Endothelial cell of umbilical vein (primary cell): ENCODE measurements at regions of chr6 and their contacts with region 1.

Region 1: GRCh38 chr6:158972241-158973233 is 27.5 kb downstream of the RSPH3 start:
- DNase-seq: peak; percentile 66
- H3K4me3 ChIP-seq: no peak overlapping the region
- H3K27ac ChIP-seq: no peak overlapping the region
- H3K4me1 ChIP-seq: no peaks in the 10 kb centered on the region
- H3K27me3 ChIP-seq: no peaks in the 10 kb centered on the region
- CTCF ChIP-seq: peak in 1 of 2 donors; percentile 14
- POLR2A ChIP-seq: no peak

Region 2: DNA sequence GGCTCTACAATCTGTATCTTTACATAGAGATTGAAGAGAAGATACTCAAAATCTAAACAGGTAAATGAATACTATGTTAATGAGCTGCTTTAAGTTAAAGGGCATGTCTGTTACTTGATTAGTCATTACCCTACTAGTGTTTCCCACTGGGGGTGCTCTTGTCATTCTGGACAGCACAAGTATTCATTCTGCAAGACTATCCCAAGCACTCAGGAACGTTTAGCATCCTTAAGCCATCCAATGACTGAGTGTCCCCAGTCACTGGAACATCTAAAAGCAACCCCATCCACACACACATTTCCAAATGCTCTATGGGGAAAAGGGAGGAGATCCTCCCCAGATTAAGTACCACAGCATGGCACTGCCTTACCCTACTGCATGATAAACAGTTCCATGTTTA is 179.1 kb before region 1 on chr6:
- CTCF ChIA-PET with region 1: interaction called, 21 read pairs
- POLR2A ChIA-PET with region 1: no interaction called
- dilution Hi-C with region 1: no loop called
- intact Hi-C with region 1: loop called (anchors 1 kb)
- DNase-seq: peak; percentile 37
- H3K4me3 ChIP-seq: no peak overlapping the region
- H3K27ac ChIP-seq: no peak overlapping the region
- H3K4me1 ChIP-seq: no peaks in the 10 kb centered on the region
- H3K27me3 ChIP-seq: no peaks in the 10 kb centered on the region
- CTCF ChIP-seq: peak; percentile 7 to 33
- POLR2A ChIP-seq: no peak

Region 3: DNA sequence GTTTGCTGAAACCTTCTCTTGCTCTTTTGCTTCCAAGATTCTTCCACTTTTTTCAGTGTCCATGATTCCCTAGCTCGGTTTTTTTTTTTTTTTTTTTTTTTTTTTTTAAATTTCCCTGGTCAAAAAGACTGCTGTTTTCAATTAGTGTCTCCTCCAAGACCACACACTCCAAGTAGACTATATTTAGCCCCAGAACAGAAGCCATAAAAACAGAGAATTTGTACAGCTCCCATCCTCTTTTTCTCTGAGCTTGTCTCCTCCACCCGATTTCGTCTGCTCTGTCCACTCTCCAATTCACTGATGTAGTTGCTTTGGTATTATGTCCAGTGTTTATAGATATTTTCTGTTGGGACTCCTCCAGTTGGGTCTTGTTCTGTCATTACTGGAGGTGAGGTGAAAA is 10.2 kb before region 1 on chr6:
- CTCF ChIA-PET with region 1: interaction called, 11 read pairs
- POLR2A ChIA-PET with region 1: no interaction called
- dilution Hi-C with region 1: no loop called
- intact Hi-C with region 1: no loop called
- DNase-seq: no peak
- H3K4me3 ChIP-seq: no peak overlapping the region
- H3K27ac ChIP-seq: no peak overlapping the region
- H3K4me1 ChIP-seq: no peaks in the 10 kb centered on the region
- H3K27me3 ChIP-seq: no peaks in the 10 kb centered on the region
- CTCF ChIP-seq: no peak
- POLR2A ChIP-seq: no peak